Mammary epithelial cell (primary cell): ENCODE measurements at regions of chr19 and their contacts with region 1.

Region 1: GRCh38 chr19:16536130-16536529 is 6.1 kb downstream of the CHERP start:
- DNase-seq: no peak
- H3K4me3 ChIP-seq: no peak overlapping the region
- H3K27ac ChIP-seq: no peak overlapping the region
- H3K4me1 ChIP-seq: peaks cover 5% of the 10 kb centered on the region
- H3K27me3 ChIP-seq: no peaks in the 10 kb centered on the region
- CTCF ChIP-seq: no peak

Region 2: DNA sequence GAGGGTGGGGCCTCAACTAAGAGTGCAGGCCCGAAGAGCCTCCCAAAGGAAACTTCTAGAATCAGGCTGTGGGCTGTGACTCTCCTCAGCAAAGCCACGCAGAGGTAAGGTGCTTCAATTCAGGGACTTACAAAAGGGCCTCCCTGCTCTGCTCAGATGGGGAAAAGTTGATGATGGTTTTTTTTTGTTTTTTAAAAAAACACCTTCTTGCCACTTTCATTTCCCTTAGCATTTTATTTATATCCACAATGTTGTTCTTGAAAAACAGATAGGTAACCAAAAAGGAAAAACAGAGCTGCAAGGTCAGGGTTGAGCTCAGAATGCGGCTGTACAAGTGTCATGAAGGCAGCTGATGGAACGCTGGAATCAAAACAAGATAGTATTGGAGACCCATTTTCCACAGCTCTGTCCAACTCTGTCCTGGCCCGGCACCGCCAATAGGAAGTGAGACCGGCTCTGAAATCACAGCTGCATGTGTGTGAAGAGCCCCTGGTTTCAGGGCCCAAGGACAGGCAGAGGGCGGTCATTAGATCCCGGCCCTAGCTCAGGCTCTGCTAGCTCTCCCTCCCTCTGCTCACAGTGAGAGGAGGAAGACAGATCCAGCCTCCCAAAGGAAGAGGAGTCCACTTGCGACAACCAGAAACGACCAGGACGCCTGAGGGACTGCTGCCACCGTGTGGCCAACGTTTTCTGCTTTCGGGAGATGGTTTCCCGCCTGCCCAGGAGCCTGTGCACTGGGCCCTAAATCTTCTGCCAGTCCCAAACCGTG is 153.2 kb before region 1 on chr19:
- CTCF ChIA-PET with region 1: no interaction called
- dilution Hi-C with region 1: no loop called
- in situ Hi-C with region 1: no loop called
- intact Hi-C with region 1: no loop called
- DNase-seq: peak; percentile 59
- H3K4me3 ChIP-seq: no peak overlapping the region
- H3K27ac ChIP-seq: no peak overlapping the region
- H3K4me1 ChIP-seq: no peaks in the 10 kb centered on the region
- H3K27me3 ChIP-seq: no peaks in the 10 kb centered on the region
- CTCF ChIP-seq: peak; percentile 81 to 85

Region 3: GRCh38 chr19:16495982-16496612 is 40.0 kb before region 1 on chr19 and contains the starts of genes C19orf44 and CALR3:
- CTCF ChIA-PET with region 1: no interaction called
- dilution Hi-C with region 1: no loop called
- in situ Hi-C with region 1: no loop called
- intact Hi-C with region 1: no loop called
- DNase-seq: peak; percentile 99
- H3K4me3 ChIP-seq: peak within 1 kb of the TSS; percentile 74 to 99 (median 84)
- H3K27ac ChIP-seq: peak within 1 kb of the TSS; percentile 54
- H3K4me1 ChIP-seq: peaks cover 7% of the 10 kb centered on the region
- H3K27me3 ChIP-seq: no peaks in the 10 kb centered on the region
- CTCF ChIP-seq: peak in 1 of 2 donors; percentile 17
- total RNA-seq, gene C19orf44: 4.8 to 5.8 TPM
- total RNA-seq, gene CALR3: not detected

Region 4: DNA sequence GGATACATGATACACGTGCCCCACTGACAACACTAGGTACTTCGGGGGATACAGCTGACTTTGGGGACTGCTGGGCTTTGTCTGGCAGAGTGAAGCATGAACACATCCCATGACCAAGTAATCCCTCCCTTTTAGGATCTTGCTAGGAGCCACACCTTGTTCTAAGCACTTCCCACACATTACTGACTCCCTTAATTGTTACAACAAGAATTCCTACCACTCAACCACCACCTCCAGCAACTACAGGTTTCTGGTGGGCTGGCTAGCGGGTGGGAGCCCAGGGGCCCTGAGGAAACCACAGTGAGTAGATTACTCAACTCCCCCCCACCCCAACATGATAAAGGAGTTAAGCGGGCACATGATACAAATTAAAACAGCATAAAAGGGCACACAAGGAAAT is 43.3 kb after region 1 on chr19:
- CTCF ChIA-PET with region 1: no interaction called
- dilution Hi-C with region 1: loop called (anchors 5 kb)
- in situ Hi-C with region 1: no loop called
- intact Hi-C with region 1: no loop called
- DNase-seq: peak; percentile 35
- H3K4me3 ChIP-seq: no peak overlapping the region
- H3K27ac ChIP-seq: peak overlapping the region; percentile 56
- H3K4me1 ChIP-seq: peaks cover 41% of the 10 kb centered on the region
- H3K27me3 ChIP-seq: no peaks in the 10 kb centered on the region
- CTCF ChIP-seq: no peak

Region 5: GRCh38 chr19:16620018-16620417 is 83.9 kb after region 1 on chr19:
- CTCF ChIA-PET with region 1: no interaction called
- dilution Hi-C with region 1: loop called (anchors 5 kb)
- in situ Hi-C with region 1: no loop called
- intact Hi-C with region 1: no loop called
- DNase-seq: no peak
- H3K4me3 ChIP-seq: no peak overlapping the region
- H3K27ac ChIP-seq: no peak overlapping the region
- H3K4me1 ChIP-seq: peaks cover 11% of the 10 kb centered on the region
- H3K27me3 ChIP-seq: no peaks in the 10 kb centered on the region
- CTCF ChIP-seq: no peak

Region 6: DNA sequence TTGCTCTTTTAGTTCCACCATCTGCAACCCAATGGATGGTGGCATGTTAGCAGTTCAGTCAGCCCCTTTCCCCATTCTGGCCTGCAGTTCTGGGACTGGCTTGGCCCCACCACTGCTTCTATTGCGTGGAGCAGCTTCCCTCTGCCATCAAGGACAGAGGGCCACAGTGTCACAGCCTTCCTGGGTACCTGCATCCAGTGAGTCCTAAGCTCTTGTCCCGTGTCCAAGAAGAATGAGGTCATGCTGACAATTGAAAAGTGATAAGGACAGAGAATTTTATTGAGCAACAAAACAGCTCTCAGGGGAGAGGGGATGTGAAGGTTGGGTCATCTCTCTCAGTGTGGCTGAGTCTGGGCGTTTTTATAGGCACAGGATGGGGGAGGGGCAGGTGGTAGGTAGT is 259.6 kb after region 1 on chr19:
- CTCF ChIA-PET with region 1: no interaction called
- dilution Hi-C with region 1: no loop called
- in situ Hi-C with region 1: no loop called
- intact Hi-C with region 1: no loop called
- DNase-seq: peak; percentile 6
- H3K4me3 ChIP-seq: no peak overlapping the region
- H3K27ac ChIP-seq: no peak overlapping the region
- H3K4me1 ChIP-seq: no peaks in the 10 kb centered on the region
- H3K27me3 ChIP-seq: no peaks in the 10 kb centered on the region
- CTCF ChIP-seq: no peak

Region 7: GRCh38 chr19:17035842-17036424 is 499.8 kb after region 1 on chr19:
- CTCF ChIA-PET with region 1: no interaction called
- dilution Hi-C with region 1: loop called (anchors 5 kb)
- in situ Hi-C with region 1: no loop called
- intact Hi-C with region 1: no loop called
- DNase-seq: no peak
- H3K4me3 ChIP-seq: no peak overlapping the region
- H3K27ac ChIP-seq: no peak overlapping the region
- H3K4me1 ChIP-seq: no peaks in the 10 kb centered on the region
- H3K27me3 ChIP-seq: no peaks in the 10 kb centered on the region
- CTCF ChIP-seq: no peak